Activated CD4-positive, alpha-beta T cell treated with anti-CD3 and anti-CD28 coated beads for 36 hours (primary cell): ENCODE measurements at regions of chr10 and their contacts with region 1.

Region 1: DNA sequence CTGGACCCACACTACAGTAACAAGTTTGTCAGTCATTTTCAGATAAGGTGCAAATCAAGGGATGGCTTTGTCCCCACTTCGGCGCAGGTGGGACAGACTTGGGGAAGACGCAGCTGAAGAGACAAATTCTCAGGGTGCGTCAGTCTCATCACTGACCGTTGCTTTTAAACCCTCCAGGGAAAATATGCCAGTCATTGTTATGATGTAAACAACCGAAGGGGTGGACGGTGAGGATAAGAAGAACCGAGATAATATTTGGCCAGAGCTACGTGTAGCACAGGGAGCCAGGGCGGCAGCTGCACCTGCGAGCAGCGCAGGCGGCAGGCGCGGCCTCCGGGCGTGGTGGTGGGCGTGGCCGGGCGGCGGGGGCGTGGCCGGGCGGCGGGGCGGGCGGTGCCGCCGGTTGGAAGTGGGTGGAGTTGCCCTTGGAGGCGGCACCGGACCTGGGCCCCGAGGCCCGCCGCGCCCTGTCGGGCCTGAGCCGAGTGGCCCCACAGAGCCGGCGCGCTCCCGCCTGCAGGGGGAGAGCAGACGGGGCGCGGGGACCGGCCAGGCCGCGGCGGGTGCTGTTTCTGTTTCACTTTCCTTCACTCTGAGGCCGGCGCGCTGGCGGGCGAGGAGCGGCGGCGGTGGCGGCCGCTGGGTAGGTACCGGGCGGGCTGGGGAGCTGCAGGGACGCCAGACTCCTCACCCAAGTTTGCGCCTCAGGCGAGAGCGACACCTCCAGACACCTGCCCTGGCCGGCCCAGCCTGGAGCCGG is at the start of gene PCGF5:
- DNase-seq: peak; percentile 94
- ATAC-seq: peak; percentile 99
- H3K4me3 Mint-ChIP-seq: peak within 1 kb of the TSS; percentile 84
- H3K27ac Mint-ChIP-seq: peak within 1 kb of the TSS; percentile 75
- H3K4me1 Mint-ChIP-seq: peaks cover 36% of the 10 kb centered on the region
- H3K27me3 Mint-ChIP-seq: no peaks in the 10 kb centered on the region
- total RNA-seq, gene PCGF5: 36.5 to 44.3 TPM

Region 2: DNA sequence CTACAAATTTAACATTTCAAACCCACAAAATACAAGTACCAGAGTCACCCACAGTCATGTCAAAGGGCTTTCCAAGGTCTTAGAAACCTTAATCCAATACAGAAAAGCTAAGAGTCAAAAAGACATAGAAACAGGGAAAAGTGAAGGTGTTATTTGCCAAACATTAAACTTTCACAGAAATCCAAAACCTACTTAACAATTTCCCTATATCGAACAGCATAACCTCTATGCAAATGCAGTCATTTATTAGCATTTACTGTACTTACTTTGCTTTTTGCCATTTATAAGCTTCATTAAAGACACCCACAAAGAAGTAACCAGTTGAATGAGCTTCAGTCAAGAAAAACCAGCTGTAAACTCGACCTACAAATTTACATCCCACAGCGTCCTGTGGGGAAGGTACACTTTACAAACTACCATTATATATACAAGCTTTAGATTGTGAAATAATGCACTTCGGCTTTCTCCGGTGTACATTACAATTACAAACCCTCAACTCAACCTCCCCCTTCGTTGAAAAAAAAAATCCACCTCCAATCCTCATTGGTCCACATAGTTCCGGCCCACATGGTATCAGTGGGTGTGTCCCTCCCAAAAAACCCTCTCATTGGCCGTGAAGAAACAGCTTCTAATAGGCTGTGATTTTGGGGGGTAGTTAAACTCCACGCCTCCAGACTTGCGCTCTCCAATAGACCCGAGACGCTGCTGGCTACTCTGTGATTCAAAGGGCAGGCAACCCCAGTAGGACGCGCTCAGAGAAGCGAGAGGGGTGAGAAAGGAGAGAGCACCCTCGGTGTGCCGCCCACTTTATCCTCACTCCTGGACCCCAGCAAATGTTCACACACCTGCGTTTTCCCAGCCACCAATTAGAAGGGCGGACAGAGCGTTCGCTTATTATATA is 1576.7 kb before region 1 on chr10:
- CTCF ChIA-PET with region 1: no interaction called
- POLR2A ChIA-PET with region 1: no interaction called
- intact Hi-C with region 1: loop called in 1 of 2 experiments (anchors 5 kb)
- DNase-seq: peak; percentile 79
- ATAC-seq: peak; percentile 87
- H3K4me3 Mint-ChIP-seq: no peak overlapping the region
- H3K27ac Mint-ChIP-seq: no peak overlapping the region
- H3K4me1 Mint-ChIP-seq: peaks cover 6% of the 10 kb centered on the region
- H3K27me3 Mint-ChIP-seq: peaks cover 6% of the 10 kb centered on the region

Region 3: GRCh38 chr10:91163269-91163868 is 57.0 kb before region 1 on chr10:
- CTCF ChIA-PET with region 1: interaction called, 3 read pairs
- POLR2A ChIA-PET with region 1: interaction called, 3 read pairs
- intact Hi-C with region 1: loop called (anchors 1 kb)
- DNase-seq: peak; percentile 83
- ATAC-seq: peak; percentile 62
- H3K4me3 Mint-ChIP-seq: peak overlapping the region; percentile 81
- H3K27ac Mint-ChIP-seq: peak overlapping the region; percentile 91
- H3K4me1 Mint-ChIP-seq: peaks cover 34% of the 10 kb centered on the region
- H3K27me3 Mint-ChIP-seq: no peaks in the 10 kb centered on the region

Region 4: GRCh38 chr10:91198781-91199180 is 21.6 kb before region 1 on chr10:
- CTCF ChIA-PET with region 1: interaction called, 6 read pairs
- POLR2A ChIA-PET with region 1: no interaction called
- intact Hi-C with region 1: loop called (anchors 1 kb)
- DNase-seq: peak; percentile 19
- ATAC-seq: peak; percentile 30
- H3K4me3 Mint-ChIP-seq: no peak overlapping the region
- H3K27ac Mint-ChIP-seq: peak overlapping the region; percentile 82
- H3K4me1 Mint-ChIP-seq: peaks cover 82% of the 10 kb centered on the region
- H3K27me3 Mint-ChIP-seq: no peaks in the 10 kb centered on the region

Region 5: DNA sequence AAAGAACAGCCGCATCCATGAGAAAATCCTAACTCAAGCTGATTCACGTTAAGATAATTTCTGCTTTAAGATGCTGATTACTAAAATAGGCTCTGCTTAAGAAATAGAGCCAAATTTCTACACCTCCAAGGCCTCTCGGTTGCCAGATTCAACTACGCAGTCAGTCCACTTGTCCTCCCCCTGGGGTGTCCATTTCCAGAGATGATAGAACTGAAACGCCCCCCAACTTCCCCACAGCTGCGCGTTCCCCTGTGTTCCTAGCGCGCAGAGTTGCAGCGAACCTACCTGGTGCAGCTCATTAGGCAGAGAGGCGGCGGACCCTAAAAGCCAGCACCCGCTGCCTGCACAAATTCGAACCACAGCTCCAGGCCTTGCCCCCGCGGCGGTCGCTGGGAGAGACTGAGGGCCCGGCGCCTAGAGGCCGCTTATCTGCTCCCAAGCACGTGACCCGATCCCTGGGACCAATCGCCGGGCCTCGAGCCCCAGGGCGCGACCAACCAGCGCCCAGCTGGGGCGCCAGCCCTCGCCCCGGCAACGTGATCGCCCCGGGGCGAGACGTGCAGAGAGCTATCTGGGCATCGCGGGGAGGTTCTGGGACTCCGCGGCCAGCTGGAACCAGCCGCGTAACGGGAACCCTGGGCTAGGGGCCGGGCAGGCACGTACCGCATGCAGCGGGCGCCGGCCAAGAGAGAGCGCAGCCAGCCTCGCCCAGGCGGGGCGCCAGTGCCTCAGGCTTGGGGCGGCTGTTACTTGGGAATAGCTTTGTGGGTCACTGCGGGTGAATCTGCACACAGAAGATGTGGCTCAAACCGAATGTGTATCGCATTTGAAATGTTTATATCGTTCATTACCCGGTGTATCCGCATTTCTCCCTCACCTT is 412.5 kb after region 1 on chr10 and contains the start of gene PPP1R3C:
- CTCF ChIA-PET with region 1: no interaction called
- POLR2A ChIA-PET with region 1: no interaction called
- intact Hi-C with region 1: no loop called
- DNase-seq: peak; percentile 83
- ATAC-seq: peak; percentile 95
- H3K4me3 Mint-ChIP-seq: peak within 1 kb of the TSS; percentile 65
- H3K27ac Mint-ChIP-seq: no peak within 1 kb of the TSS
- H3K4me1 Mint-ChIP-seq: peaks cover 8% of the 10 kb centered on the region
- H3K27me3 Mint-ChIP-seq: peaks cover 59% of the 10 kb centered on the region
- total RNA-seq, gene PPP1R3C: 0.63 to 0.71 TPM